ENCODE measurements at regions of chr5 and their contacts with region 1.

Region 1: GRCh38 chr5:180718810-180719453 is 20.9 kb downstream of the OR2Y1 start:
- DNase-seq: peak; percentile 72
- H3K4me3 Mint-ChIP-seq: no peak overlapping the region
- H3K27ac Mint-ChIP-seq: no peak overlapping the region
- H3K4me1 Mint-ChIP-seq: peaks cover 17% of the 10 kb centered on the region
- H3K27me3 Mint-ChIP-seq: no peaks in the 10 kb centered on the region

Region 2: DNA sequence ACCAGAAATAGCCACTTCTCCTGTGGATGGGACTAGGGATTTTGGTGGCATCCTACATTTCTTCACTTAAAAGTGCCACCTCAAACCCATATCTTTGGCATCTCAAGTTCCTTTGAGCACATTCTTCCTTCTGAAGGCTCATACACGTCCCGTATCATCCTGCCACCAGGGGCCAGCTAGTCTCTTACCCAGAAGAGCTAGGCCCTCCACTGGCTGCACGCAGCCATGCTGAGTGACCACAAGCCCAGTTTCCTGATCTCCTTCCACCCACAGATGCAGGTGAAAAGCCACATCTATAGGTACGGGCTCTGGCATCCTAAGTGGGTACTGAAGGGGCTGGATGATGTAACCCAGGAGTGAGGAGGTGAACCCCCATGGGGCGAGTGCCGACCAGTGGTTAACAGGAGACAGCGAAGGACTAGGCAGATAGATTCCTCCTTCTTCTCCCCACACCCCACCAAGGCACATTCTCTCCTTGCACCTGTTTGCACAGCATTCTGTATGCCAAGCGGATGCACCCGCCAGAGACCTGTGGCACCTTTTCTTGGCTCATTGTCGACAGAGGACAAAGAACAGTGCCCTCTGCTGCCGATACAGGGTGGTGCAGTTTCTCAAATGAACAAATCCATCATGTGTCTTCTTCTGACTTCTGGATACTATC is 113.2 kb before region 1 on chr5:
- CTCF ChIA-PET with region 1: no interaction called
- intact Hi-C with region 1: loop called (anchors 5 kb)
- DNase-seq: peak; percentile 87
- H3K4me3 Mint-ChIP-seq: no peak overlapping the region
- H3K27ac Mint-ChIP-seq: no peak overlapping the region
- H3K4me1 Mint-ChIP-seq: no peaks in the 10 kb centered on the region
- H3K27me3 Mint-ChIP-seq: no peaks in the 10 kb centered on the region

Region 3: GRCh38 chr5:180618819-180619562 is 99.9 kb before region 1 on chr5:
- CTCF ChIA-PET with region 1: interaction called, 6 read pairs
- intact Hi-C with region 1: loop called (anchors 2 kb)
- DNase-seq: peak; percentile 53
- H3K4me3 Mint-ChIP-seq: peak overlapping the region; percentile 60
- H3K27ac Mint-ChIP-seq: no peak overlapping the region
- H3K4me1 Mint-ChIP-seq: peaks cover 13% of the 10 kb centered on the region
- H3K27me3 Mint-ChIP-seq: no peaks in the 10 kb centered on the region

Region 4: GRCh38 chr5:180631509-180632395 is 87.2 kb before region 1 on chr5:
- CTCF ChIA-PET with region 1: no interaction called
- intact Hi-C with region 1: no loop called
- DNase-seq: no peak
- H3K4me3 Mint-ChIP-seq: no peak overlapping the region
- H3K27ac Mint-ChIP-seq: no peak overlapping the region
- H3K4me1 Mint-ChIP-seq: no peaks in the 10 kb centered on the region
- H3K27me3 Mint-ChIP-seq: no peaks in the 10 kb centered on the region

Region 5: DNA sequence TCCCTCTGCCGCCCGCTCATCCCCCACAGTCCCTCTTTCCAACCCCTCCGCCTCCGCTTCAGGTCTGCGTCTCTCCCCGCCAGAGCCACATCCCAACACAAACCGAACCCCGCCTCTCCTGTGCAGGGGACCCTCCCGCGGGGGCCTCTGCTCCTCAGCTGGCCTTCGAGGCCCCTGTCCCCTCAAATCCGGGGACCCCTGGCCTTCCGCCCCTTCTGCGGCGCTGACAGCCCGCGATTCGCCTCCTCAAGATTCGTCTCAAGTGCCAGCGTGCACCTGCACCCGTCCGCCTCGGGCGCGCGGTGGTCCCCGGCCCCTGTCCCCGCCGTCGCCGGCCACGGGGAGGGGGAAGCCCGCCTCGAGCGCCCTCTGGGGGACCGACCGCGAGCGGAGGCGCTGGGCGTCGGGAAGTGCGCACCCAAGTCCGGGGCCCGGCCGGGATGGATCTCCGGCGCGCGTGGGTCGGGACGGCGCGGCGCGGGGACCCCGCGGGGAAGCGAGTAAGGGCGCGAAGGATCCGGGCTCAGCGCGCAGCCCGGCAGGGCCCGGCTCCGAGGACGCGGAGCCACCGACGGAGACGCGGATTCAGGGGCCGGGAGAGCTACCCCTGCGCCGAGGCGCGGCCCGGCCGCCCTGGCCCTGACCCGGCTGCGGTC is 70.2 kb before region 1 on chr5:
- CTCF ChIA-PET with region 1: no interaction called
- intact Hi-C with region 1: loop called (anchors 2 kb)
- DNase-seq: no peak
- H3K4me3 Mint-ChIP-seq: peak overlapping the region; percentile 71
- H3K27ac Mint-ChIP-seq: no peak overlapping the region
- H3K4me1 Mint-ChIP-seq: peaks cover 9% of the 10 kb centered on the region
- H3K27me3 Mint-ChIP-seq: peaks cover 33% of the 10 kb centered on the region

Region 6: DNA sequence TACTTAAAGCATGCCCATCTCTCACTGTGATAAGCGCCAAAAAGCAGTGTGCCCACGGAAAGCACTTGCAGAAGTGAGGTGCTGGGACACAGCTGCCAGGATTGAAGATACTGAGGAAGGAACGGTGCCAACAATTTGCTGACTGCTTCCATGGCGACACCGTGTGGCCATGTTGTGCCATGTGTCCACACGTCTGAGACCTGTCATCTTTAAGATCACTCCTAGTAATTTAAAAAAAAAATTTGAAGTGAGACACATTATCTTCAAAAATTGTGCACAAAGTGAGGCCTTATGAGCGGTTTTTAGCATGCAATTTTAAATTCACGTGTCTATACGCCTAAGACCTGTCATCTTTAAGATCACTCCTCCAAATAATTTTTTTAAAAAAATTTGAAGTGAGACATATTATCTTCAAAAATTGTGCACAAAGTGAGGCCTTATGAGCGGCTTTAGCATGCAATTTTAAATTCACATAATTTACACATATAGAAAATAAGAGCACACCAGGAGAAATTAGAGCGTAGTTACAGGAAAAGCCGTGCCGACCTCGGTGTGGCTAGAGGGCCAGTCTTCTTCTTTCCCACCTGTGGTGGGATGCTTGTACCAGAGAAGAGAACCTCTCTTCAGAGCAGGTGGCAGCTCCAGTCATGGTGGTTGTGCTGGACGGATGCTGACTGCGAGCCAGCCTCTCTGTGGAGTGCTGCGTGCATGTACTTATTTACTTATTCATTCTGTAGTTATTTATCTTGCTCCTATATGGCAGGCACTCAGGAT is 48.2 kb before region 1 on chr5:
- CTCF ChIA-PET with region 1: interaction called, 3 read pairs
- intact Hi-C with region 1: loop called (anchors 1 kb)
- DNase-seq: peak; percentile 79
- H3K4me3 Mint-ChIP-seq: peak overlapping the region; percentile 10
- H3K27ac Mint-ChIP-seq: no peak overlapping the region
- H3K4me1 Mint-ChIP-seq: peaks cover 15% of the 10 kb centered on the region
- H3K27me3 Mint-ChIP-seq: peaks cover 7% of the 10 kb centered on the region

Region 7: DNA sequence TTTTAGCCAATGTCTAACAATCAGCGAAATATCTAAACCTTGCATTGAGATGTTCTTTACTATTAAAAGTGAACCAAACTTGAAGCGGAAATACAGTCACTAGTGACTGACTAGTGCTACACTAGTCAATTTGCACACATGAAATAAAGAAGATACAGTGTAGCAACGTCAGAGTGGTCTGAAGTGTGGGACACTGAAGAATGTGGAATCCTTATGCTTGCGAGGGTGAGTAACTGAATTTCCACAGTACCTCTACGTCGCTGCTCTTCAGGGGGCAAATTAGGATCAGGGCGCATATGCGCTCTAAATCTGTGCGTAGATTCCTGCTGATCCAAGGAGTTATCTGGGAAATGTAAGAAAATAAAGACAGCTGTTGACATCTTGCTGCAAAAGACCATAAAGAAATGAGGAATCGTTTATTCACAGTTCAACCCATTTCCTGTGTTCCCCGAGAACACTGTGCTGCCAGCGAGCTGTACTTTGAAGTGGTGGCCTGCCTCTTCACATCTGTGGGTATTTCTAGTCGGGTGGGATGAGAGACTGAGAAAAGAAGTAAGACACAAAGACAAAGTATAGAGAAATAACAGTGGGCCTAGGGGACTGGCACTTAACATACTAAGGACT is 29.7 kb before region 1 on chr5:
- CTCF ChIA-PET with region 1: interaction called, 13 read pairs
- intact Hi-C with region 1: loop called (anchors 1 kb)
- DNase-seq: peak; percentile 75
- H3K4me3 Mint-ChIP-seq: peak overlapping the region; percentile 59
- H3K27ac Mint-ChIP-seq: peak overlapping the region; percentile 60
- H3K4me1 Mint-ChIP-seq: peaks cover 63% of the 10 kb centered on the region
- H3K27me3 Mint-ChIP-seq: no peaks in the 10 kb centered on the region